ENCODE measurements at regions of chr9 and their contacts with region 1.

Region 1: GRCh38 chr9:70195456-70195855 is 63.3 kb upstream of the SMC5 start:
- DNase-seq: no peak
- H3K4me3 ChIP-seq: no peak overlapping the region
- H3K27ac ChIP-seq: no peak overlapping the region
- H3K4me1 ChIP-seq: no peaks in the 10 kb centered on the region
- CTCF ChIP-seq: no peak

Region 2: GRCh38 chr9:70136632-70137031 is 58.8 kb before region 1 on chr9:
- CTCF ChIA-PET with region 1: no interaction called
- POLR2A ChIA-PET with region 1: no interaction called
- intact Hi-C with region 1: loop called (anchors 10 kb)
- DNase-seq: no peak
- H3K4me3 ChIP-seq: no peak overlapping the region
- H3K27ac ChIP-seq: no peak overlapping the region
- H3K4me1 ChIP-seq: no peaks in the 10 kb centered on the region
- CTCF ChIP-seq: no peak

Region 3: DNA sequence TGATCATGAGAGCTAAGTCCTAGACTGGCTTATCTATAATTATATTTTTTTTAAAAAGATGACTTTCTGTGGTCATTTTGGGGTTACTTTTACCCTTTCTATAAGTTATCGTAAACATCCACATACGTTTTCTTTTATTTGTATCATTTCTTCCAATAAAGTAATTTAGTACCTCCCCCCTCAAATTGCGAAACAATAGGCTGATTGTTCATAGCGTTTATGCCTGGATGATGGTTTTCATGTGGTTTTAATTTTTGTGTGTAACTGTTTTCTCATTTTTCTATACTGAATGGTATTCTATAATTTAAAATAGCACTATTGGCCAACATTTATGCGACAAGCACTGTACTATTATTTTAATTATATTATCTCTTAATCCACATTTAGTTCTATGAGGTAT is 107.8 kb after region 1 on chr9:
- CTCF ChIA-PET with region 1: no interaction called
- POLR2A ChIA-PET with region 1: no interaction called
- intact Hi-C with region 1: no loop called
- DNase-seq: no peak
- H3K4me3 ChIP-seq: no peak overlapping the region
- H3K27ac ChIP-seq: no peak overlapping the region
- H3K4me1 ChIP-seq: no peaks in the 10 kb centered on the region
- CTCF ChIP-seq: no peak